ENCODE measurements at regions of chr7 and their contacts with region 1.

Region 1: DNA sequence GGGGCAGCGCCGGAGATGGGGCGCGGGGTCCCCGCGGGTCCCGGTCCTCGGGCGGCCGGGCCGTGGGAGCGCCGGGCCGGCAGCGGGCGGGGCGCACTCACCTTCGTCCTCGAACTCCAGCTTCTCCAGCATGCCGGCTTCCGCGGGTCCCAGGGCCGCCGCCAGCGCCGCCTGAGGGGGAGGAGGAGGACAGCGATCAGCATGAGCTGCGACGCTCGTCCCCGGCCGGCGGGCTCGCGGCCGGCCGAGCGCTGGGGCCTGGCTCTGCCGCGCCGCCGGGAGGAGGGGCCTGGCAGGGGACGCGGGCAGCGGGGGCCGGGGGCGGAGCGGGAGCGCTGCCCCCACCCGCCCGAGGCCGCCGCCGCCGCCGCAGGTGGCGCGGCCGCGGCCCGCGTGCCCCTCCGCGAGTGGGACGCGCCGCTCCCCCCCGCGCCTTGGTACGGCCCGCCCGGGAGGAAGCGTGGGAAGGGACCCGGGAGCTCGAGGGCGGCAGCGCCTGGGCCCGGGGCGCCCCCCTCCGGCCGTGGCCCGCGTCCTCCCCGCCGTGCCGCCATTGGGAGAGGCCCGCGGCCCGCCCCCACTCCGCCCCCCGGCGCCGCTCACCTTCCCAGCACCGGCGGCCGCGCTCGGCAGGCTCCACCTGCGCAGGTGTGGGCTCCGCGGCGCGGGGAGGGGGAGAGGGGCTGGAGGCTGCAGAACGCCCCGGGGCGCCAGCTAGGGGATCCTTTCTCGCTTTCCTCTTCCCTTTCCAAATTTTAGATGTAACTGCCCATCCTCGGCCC is 112.5 kb upstream of the RHEB start:
- DNase-seq: peak; percentile 85
- ATAC-seq: peak; percentile 86
- H3K4me3 Mint-ChIP-seq: peak overlapping the region; percentile 94
- H3K27ac Mint-ChIP-seq: peak overlapping the region; percentile 94
- H3K4me1 Mint-ChIP-seq: peaks cover 20% of the 10 kb centered on the region
- H3K27me3 Mint-ChIP-seq: no peaks in the 10 kb centered on the region

Region 2: DNA sequence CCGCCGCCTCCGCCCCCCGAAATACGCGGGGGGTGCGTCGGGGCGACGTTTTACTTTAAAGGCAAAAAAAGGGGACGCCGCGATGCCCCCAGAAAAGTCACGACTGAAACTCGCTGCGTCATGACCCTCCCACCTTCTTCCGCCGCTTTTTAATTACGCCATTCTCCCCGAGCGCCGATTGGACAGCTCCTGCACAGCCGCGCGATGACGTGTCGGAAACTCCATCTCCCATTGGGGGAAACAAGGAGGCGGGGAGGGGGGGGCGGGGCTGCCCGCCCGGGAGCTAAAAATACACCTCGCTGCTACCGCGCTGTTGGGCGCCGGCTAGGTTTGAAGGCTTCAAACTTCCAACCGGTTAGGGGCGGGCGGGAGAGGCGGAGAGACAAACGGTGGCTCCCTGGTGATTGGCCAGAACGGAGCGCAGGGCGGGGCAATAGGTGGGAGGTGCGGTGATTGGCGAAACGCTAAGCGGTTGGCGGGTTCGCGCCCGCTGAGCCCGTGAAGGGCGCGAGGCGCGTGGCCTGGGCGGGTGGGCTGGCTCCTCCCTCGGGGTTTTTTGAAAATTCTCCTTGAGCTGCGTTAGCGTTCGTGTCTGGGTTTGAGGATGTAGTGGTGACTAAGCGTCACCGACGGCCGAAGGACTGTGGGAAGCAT is 112.3 kb before region 1 on chr7 and contains the start of gene RHEB:
- CTCF ChIA-PET with region 1: interaction called, 12 read pairs
- POLR2A ChIA-PET with region 1: interaction called, 8 read pairs
- DNase-seq: peak; percentile 98
- ATAC-seq: peak; percentile 89
- H3K4me3 Mint-ChIP-seq: peak within 1 kb of the TSS; percentile 98
- H3K27ac Mint-ChIP-seq: peak within 1 kb of the TSS; percentile 98
- H3K4me1 Mint-ChIP-seq: peaks cover 40% of the 10 kb centered on the region
- H3K27me3 Mint-ChIP-seq: peaks cover 9% of the 10 kb centered on the region
- total RNA-seq, gene RHEB: 81.1 to 90.3 TPM

Region 3: DNA sequence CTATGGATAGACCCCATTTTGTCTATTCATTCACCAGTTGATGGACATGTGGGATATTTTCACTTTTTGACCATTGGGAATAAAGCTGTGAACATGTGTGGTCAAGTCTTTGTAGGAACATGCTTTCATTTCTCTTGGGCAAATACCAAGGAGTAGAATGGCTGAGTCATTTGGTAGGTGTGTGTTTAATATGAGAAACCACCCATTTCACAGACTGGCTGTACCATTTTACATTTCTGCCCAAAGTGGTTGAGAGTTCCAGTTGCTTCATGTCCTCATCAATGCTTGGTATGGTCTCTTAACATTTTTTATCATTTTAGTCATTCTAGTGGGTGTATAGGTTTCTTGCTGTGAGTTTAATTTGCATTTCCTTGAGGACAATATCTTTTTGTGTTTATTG is 12.4 kb after region 1 on chr7:
- CTCF ChIA-PET with region 1: interaction called, 31 read pairs
- POLR2A ChIA-PET with region 1: interaction called, 6 read pairs
- DNase-seq: no peak
- ATAC-seq: no peak
- H3K4me3 Mint-ChIP-seq: no peak overlapping the region
- H3K27ac Mint-ChIP-seq: no peak overlapping the region
- H3K4me1 Mint-ChIP-seq: no peaks in the 10 kb centered on the region
- H3K27me3 Mint-ChIP-seq: no peaks in the 10 kb centered on the region

Region 4: DNA sequence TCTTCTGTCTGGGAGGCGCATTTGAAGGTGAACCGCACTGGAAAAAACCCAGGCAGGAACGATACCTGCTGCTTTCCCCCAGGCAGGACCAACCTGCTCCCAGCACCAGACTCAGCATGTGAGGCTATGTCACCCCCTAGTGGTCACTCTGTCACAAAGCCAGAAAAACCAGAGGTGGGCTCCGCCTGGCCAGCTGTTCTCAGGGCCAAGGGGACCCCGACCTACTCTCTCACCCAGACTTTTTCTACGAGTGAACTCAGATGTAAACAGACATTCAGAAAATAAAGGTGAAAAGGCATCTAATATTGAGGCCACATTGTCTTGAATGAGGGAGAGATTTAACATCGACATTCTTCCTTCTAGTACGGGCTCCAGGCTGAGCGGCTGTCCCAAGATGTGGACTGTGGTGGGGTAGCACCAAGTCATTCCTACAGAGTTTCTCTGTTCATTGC is 127.5 kb after region 1 on chr7:
- CTCF ChIA-PET with region 1: interaction called, 45 read pairs
- POLR2A ChIA-PET with region 1: interaction called, 6 read pairs
- DNase-seq: peak; percentile 75
- ATAC-seq: peak; percentile 59
- H3K4me3 Mint-ChIP-seq: no peak overlapping the region
- H3K27ac Mint-ChIP-seq: peak overlapping the region; percentile 49
- H3K4me1 Mint-ChIP-seq: peaks cover 35% of the 10 kb centered on the region
- H3K27me3 Mint-ChIP-seq: no peaks in the 10 kb centered on the region

Region 5: DNA sequence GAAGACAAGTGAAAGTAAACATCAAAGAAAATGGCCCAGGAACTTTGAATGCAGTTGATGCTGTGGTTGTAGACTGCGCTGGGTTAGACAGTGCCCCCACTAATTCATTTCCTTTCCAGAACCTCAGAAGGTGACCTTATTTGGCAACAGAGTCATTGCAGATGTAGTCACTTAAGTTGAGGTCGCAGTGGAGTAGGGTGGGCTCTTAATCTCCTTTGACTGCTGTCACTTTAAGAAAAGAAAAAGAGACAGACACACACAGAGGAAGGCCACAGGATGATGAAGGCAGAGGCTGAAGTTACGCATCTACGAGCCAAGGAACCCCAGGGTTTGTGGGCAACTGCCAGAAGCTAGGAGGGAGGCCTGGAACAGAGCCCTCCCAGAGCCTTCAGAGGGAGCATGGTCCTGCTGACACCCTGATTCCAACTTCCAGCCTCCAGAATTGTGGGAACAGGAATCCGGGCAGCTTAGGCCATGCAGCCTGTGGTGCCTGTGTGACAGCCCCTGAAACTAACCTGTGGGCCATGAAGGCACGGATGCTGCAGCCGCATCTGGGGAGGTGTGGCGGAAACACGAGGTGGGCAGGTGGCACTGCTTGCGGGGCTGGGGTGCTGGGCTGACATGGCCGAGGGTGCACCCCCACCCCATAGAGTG is 137.2 kb after region 1 on chr7:
- CTCF ChIA-PET with region 1: interaction called, 12 read pairs
- POLR2A ChIA-PET with region 1: interaction called, 7 read pairs
- DNase-seq: peak; percentile 81
- ATAC-seq: peak; percentile 93
- H3K4me3 Mint-ChIP-seq: peak overlapping the region; percentile 75
- H3K27ac Mint-ChIP-seq: peak overlapping the region; percentile 99
- H3K4me1 Mint-ChIP-seq: peaks cover 66% of the 10 kb centered on the region
- H3K27me3 Mint-ChIP-seq: no peaks in the 10 kb centered on the region

Region 6: GRCh38 chr7:151818674-151819537 is 186.7 kb after region 1 on chr7:
- CTCF ChIA-PET with region 1: no interaction called
- POLR2A ChIA-PET with region 1: no interaction called
- DNase-seq: no peak
- ATAC-seq: no peak
- H3K4me3 Mint-ChIP-seq: no peak overlapping the region
- H3K27ac Mint-ChIP-seq: no peak overlapping the region
- H3K4me1 Mint-ChIP-seq: no peaks in the 10 kb centered on the region
- H3K27me3 Mint-ChIP-seq: no peaks in the 10 kb centered on the region